ENCODE measurements at regions of chr12 and their contacts with region 1.

Region 1: GRCh38 chr12:53746592-53747092 is 5.1 kb downstream of the CISTR start:
- DNase-seq: peak; percentile 77 to 96
- H3K4me3 ChIP-seq: no peak overlapping the region
- H3K27ac ChIP-seq: no peak overlapping the region
- H3K4me1 ChIP-seq: peaks cover 0 to 24% (median 6%) of the 10 kb centered on the region in 4 experiments; a peak in 5 of 7 replicates
- H3K27me3 ChIP-seq: peaks cover 43 to 77% (median 57%) of the 10 kb centered on the region in 4 experiments
- CTCF ChIP-seq: peak; percentile 99 to 100 (median 100)
- EP300 ChIP-seq: peak in 1 of 2 experiments; percentile 50; a peak in 1 of 3 replicates
- POLR2A ChIP-seq: no peak
- RAD21 ChIP-seq: peak; percentile 89 to 96

Region 2: GRCh38 chr12:53543539-53543938 is 203.1 kb before region 1 on chr12:
- CTCF ChIA-PET with region 1: interaction called, 13 read pairs
- POLR2A ChIA-PET with region 1: no interaction called
- DNase-seq: peak in 1 of 2 experiments; percentile 47
- H3K4me3 ChIP-seq: no peak overlapping the region
- H3K27ac ChIP-seq: no peak overlapping the region
- H3K4me1 ChIP-seq: 0 out of 7 replicates have a peak, but pooled peaks cover 0 to 5% (median 0%) of the 10 kb centered on the region in 4 experiments
- H3K27me3 ChIP-seq: no peaks in the 10 kb centered on the region
- CTCF ChIP-seq: peak; percentile 82 to 99 (median 92)
- EP300 ChIP-seq: no peak
- POLR2A ChIP-seq: no peak
- RAD21 ChIP-seq: peak; percentile 82 to 86

Region 3: DNA sequence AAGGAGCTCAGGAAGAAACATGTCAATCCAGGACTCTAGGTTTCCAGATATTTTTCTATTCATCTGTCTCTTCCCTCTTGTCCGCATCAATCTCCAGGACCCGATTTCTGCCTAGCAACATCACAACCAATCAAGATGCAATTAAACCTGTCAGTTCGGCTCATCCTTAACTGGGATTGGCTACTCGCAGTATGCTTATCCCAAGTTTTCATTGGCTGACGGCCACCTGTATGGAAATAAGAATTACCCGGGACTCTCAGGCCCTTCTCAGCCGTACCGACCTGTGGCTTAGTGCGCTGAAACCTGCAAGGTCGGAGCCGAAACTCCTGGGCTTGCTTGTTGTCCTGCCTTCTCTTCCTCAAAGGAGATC is 50.4 kb before region 1 on chr12:
- CTCF ChIA-PET with region 1: interaction called, 194 read pairs
- POLR2A ChIA-PET with region 1: interaction called, 4 read pairs
- DNase-seq: peak; percentile 64 to 75
- H3K4me3 ChIP-seq: peak overlapping the region; percentile 30 to 57 (median 38); a peak in 7 of 8 replicates
- H3K27ac ChIP-seq: no peak overlapping the region
- H3K4me1 ChIP-seq: peaks cover 3 to 17% (median 9%) of the 10 kb centered on the region in 4 experiments
- H3K27me3 ChIP-seq: peaks cover 8 to 40% (median 35%) of the 10 kb centered on the region in 4 experiments
- CTCF ChIP-seq: no peak
- EP300 ChIP-seq: no peak
- POLR2A ChIP-seq: peak in 1 of 2 experiments; percentile 73; a peak in 2 of 3 replicates
- RAD21 ChIP-seq: no peak

Region 4: GRCh38 chr12:53719649-53720048 is 27.0 kb before region 1 on chr12:
- CTCF ChIA-PET with region 1: interaction called, 82 read pairs
- POLR2A ChIA-PET with region 1: no interaction called
- DNase-seq: no peak
- H3K4me3 ChIP-seq: no peak overlapping the region
- H3K27ac ChIP-seq: no peak overlapping the region
- H3K4me1 ChIP-seq: no peaks in the 10 kb centered on the region; a peak in 1 of 7 replicates
- H3K27me3 ChIP-seq: no peaks in the 10 kb centered on the region
- CTCF ChIP-seq: no peak
- EP300 ChIP-seq: no peak
- POLR2A ChIP-seq: no peak
- RAD21 ChIP-seq: no peak

Region 5: DNA sequence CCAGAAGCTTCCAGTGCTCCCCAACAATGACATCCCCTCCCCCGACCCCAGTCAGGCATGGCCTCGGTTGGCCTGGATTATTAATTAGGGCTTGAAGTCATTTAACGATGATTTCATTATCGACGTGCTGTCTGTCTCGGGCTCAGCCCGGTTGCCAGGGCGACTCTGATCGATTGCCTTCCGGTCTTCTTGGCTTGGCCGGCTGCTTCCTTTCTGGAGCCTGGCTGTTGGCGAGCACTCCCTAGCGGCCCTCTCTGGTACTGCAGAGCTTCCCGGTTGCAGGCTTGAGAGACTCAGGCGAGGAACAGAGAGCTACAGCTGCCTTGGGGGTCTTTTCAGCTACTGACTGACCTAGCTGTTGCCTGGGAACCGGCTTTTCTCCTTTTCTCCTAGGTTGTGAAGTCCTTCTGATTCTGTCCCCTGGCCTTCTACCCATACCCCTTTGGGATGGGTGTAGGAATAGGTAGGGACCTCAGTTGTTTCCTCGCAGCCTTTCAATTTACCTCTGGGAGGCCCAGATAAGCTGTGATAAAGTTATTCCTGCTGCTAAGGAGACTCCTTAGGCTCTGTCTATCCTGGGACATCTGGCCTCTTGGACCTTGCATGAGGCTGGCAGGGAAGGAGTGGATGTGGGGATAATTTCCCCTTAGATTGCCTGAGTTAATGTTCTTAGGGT is 10.6 kb after region 1 on chr12:
- CTCF ChIA-PET with region 1: interaction called, 152 read pairs
- POLR2A ChIA-PET with region 1: interaction called, 3 read pairs
- DNase-seq: peak; percentile 70 to 99
- H3K4me3 ChIP-seq: peak overlapping the region; percentile 19 to 52 (median 42); a peak in 6 of 8 replicates
- H3K27ac ChIP-seq: no peak overlapping the region
- H3K4me1 ChIP-seq: peaks cover 3 to 17% (median 7%) of the 10 kb centered on the region in 4 experiments
- H3K27me3 ChIP-seq: peaks cover 17 to 38% (median 33%) of the 10 kb centered on the region in 4 experiments
- CTCF ChIP-seq: peak; percentile 85 to 93 (median 92)
- EP300 ChIP-seq: no peak
- POLR2A ChIP-seq: no peak
- RAD21 ChIP-seq: peak; percentile 56 to 73